Endothelial cell of umbilical vein (primary cell): ENCODE measurements at regions of chr12 and their contacts with region 1.

Region 1: DNA sequence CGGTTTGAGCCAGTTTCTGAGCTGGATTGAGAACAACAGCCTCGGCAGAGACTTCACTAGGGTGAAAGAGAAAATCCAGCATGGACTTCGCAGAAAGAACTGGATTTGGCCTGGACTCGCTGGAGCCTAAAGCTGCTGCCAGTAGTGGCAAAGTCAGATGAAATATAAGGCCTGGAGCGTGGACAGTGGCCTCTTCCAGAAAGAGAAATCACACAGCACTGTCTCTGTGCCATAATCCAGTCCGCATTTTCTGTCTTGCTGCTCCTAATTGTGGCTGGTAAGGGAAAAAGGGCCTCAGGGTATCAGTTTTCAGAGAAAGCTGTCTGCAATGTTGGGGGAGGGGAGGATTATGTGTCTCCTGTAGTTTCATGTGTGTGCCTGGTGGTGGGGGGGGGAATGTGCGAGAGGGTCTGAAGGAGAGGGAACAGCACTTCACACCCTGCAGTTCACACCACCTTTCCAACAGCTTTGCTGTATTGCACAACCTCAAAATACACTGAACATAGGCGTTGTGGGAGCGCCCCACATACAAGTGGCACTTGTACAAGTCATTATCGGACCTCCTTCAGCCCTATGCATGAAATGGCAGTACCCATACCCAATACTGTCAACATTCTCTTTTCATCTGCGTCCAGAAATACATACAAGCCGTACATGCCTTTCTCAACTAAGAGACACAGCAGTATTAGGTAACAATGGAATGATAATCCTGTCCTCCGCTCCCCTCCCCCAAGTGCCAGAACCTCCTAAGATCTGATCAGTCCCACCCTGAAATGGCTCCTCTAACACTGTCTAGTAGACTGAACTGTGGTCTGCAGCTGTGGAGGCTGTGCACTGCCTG is 107.5 kb upstream of the ATF7IP start:
- DNase-seq: peak; percentile 99
- H3K4me3 ChIP-seq: no peak overlapping the region
- H3K27ac ChIP-seq: peak overlapping the region; percentile 87
- H3K4me1 ChIP-seq: peaks cover 46% of the 10 kb centered on the region
- H3K27me3 ChIP-seq: no peaks in the 10 kb centered on the region
- CTCF ChIP-seq: no peak
- POLR2A ChIP-seq: no peak

Region 2: GRCh38 chr12:14365294-14366208 is 107.6 kb after region 1 on chr12 and contains the start of gene ATF7IP:
- CTCF ChIA-PET with region 1: interaction called, 26 read pairs
- POLR2A ChIA-PET with region 1: interaction called, 14 read pairs
- dilution Hi-C with region 1: no loop called
- intact Hi-C with region 1: loop called (anchors 1 kb)
- DNase-seq: peak; percentile 97
- H3K4me3 ChIP-seq: peak within 1 kb of the TSS; percentile 53 to 98 (median 98)
- H3K27ac ChIP-seq: peak within 1 kb of the TSS; percentile 89
- H3K4me1 ChIP-seq: peaks cover 17% of the 10 kb centered on the region
- H3K27me3 ChIP-seq: no peaks in the 10 kb centered on the region
- CTCF ChIP-seq: no peak
- POLR2A ChIP-seq: peak; percentile 81
- total RNA-seq, gene ATF7IP: 72.4 and 73.5 TPM in 2 replicates

Region 3: GRCh38 chr12:14384783-14385638 is 127.1 kb after region 1 on chr12:
- CTCF ChIA-PET with region 1: interaction called, 11 read pairs
- POLR2A ChIA-PET with region 1: interaction called, 10 read pairs
- dilution Hi-C with region 1: no loop called
- intact Hi-C with region 1: loop called (anchors 1 kb)
- DNase-seq: peak; percentile 94
- H3K4me3 ChIP-seq: peak overlapping the region in 1 of 3 experiments; percentile 16
- H3K27ac ChIP-seq: peak overlapping the region; percentile 58
- H3K4me1 ChIP-seq: peaks cover 20% of the 10 kb centered on the region
- H3K27me3 ChIP-seq: no peaks in the 10 kb centered on the region
- CTCF ChIP-seq: no peak
- POLR2A ChIP-seq: no peak

Region 4: DNA sequence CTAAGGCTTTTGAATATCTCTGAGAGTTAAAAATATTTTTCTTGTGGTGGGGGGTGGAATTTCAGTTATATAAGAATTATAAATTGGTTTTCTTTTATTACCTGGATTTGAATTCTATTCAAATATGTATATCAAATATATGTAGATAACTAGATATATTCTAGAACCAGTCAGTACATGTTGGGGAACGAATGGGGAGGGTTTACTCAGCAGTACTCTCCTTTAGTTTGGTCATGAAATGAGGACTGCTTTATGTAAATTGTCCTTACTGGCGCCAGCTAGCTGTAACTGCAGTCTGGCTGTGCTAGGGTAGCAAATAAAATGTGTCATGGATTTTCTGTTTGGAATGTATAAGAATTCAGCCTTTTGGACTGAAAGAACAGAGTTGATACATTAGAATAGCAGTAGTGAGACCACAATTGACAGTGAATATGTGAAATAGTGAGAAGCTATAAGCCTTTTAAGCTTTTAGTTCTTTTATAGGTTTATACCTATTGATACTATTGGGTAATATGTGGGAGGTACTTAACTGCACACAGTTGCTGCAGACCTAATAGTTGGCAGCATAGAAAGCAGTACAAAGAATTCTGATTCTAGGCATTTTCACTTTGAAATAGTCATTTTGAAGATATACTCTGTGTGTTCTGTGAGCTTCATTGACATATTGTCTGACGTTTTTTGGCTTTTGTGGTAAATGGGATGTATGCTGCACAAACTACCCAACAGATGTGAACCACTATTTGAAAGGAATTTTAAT is 136.5 kb after region 1 on chr12:
- CTCF ChIA-PET with region 1: interaction called, 5 read pairs
- POLR2A ChIA-PET with region 1: interaction called, 4 read pairs
- dilution Hi-C with region 1: no loop called
- intact Hi-C with region 1: loop called (anchors 2 kb)
- DNase-seq: peak; percentile 63
- H3K4me3 ChIP-seq: no peak overlapping the region
- H3K27ac ChIP-seq: peak overlapping the region; percentile 42
- H3K4me1 ChIP-seq: peaks cover 32% of the 10 kb centered on the region
- H3K27me3 ChIP-seq: no peaks in the 10 kb centered on the region
- CTCF ChIP-seq: no peak
- POLR2A ChIP-seq: no peak

Region 5: GRCh38 chr12:14454098-14454907 is 196.3 kb after region 1 on chr12:
- CTCF ChIA-PET with region 1: interaction called, 5 read pairs
- POLR2A ChIA-PET with region 1: no interaction called
- dilution Hi-C with region 1: no loop called
- intact Hi-C with region 1: loop called (anchors 1 kb)
- DNase-seq: peak; percentile 33
- H3K4me3 ChIP-seq: no peak overlapping the region
- H3K27ac ChIP-seq: no peak overlapping the region
- H3K4me1 ChIP-seq: no peaks in the 10 kb centered on the region
- H3K27me3 ChIP-seq: no peaks in the 10 kb centered on the region
- CTCF ChIP-seq: peak; percentile 59 to 63
- POLR2A ChIP-seq: no peak

Region 6: DNA sequence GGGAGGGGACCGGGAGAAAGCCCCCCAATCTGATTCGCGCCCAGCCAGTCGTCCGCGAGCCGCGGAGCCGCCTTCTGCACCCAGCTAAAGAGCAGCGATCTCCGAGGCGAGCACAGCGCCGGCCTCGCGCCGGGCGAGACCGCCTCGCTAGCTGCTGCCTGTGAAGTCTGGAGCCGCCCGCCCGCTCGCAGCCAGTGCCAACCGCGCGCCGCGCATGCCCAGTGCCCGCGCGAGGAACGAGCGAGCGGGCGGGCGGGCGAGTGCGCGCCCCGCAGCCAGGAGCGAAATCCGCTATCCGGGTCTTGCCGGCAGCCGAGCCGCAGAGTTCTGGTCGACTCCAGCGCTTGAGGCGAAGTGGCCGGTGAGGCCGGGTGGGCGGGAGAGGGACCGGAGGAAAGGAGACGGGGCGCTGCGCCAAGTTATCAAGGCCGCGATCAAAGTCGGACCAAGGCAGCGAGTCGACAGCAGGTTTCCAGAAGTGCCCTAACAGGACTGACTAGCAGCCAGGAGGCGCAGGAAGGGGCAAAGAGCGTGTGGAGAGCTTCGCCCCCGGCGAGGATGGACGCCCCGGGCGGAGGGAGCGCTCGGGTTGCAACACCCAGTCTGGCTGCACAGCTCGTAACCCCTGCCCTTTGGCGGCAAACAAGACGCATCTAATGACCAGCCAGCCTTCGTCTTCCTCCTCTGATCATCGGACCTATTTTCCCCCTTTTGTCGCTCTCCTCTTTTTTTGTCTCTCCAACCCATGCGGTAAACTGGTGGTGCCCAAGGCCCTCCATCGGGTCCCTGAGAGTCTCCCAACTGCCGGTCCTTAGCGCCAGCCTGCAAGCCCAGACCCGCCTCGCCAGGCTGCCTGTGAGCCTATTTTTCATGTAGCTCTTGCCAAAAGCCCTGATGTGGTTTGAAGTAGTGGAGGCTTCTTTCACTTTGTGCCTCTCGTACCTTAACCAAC is 1531.5 kb after region 1 on chr12 and contains the start of gene EPS8:
- CTCF ChIA-PET with region 1: no interaction called
- POLR2A ChIA-PET with region 1: no interaction called
- dilution Hi-C with region 1: no loop called
- intact Hi-C with region 1: loop called (anchors 5 kb)
- DNase-seq: peak; percentile 94
- H3K4me3 ChIP-seq: peak within 1 kb of the TSS; percentile 49 to 83 (median 83)
- H3K27ac ChIP-seq: peak within 1 kb of the TSS; percentile 52
- H3K4me1 ChIP-seq: peaks cover 13% of the 10 kb centered on the region
- H3K27me3 ChIP-seq: no peaks in the 10 kb centered on the region
- CTCF ChIP-seq: no peak
- POLR2A ChIP-seq: peak; percentile 59
- total RNA-seq, gene EPS8: 11.9 and 12.1 TPM in 2 replicates